HepG2 (cell line): ENCODE measurements at regions of chr2 and their contacts with region 1.

Region 1: GRCh38 chr2:223930103-223930976 is 14.8 kb downstream of the WDFY1 start:
- DNase-seq: peak; percentile 97
- ATAC-seq: peak; percentile 96
- H3K4me3 ChIP-seq: peak overlapping the region; percentile 53 to 68 (median 64)
- H3K27ac ChIP-seq: peak overlapping the region; percentile 90
- H3K4me1 ChIP-seq: peaks cover 63% of the 10 kb centered on the region
- H3K27me3 ChIP-seq: no peaks in the 10 kb centered on the region; a peak in 1 of 5 replicates
- CTCF ChIP-seq: 0 out of 2 replicates have a peak, but pooled peaks have one; percentile 16
- EP300 ChIP-seq: no peak; a peak in 1 of 4 replicates
- POLR2A ChIP-seq: peak; percentile 65 to 89; a peak in 3 of 4 replicates
- RAD21 ChIP-seq: no peak; the same call in none of the 2 replicates

Region 2: DNA sequence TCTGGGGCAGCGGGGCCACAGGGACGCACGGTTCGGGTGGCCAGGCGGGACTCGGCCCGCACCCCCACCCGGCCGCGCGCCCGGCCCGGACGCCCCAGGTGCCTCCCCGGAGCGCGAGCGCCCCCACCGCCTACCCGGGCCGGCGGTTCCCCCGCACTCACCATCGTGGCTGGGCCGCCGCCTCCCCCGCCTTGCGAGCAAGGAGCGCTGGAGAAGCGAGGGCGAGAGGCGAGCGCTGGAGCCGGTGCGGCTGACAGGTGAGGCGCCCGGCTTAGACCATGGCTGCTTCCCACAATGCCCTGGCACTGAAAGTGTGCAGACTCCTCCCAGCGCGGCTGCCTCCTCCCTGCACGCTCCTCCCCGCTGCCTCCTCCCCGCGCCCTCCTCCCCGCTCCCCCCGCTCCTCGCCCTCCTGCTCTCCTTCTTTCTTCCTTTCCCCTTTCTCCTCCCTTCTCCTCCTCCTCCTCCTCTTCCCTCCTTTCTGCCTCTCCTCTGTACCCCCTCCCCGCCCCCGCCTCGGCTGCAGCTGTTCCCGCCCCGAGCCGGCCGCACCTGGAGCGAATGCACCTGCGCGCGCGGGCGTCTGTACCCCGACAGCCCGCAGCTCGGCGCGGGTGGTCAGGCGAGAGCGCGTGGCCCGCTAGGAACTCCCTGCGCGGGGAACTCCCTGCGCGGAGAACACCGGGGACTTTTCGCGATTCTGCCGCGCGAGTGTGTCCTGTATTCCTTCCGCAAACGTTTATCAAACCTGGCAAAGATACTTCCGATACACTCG is 92.9 kb before region 1 on chr2 and contains the start of gene AP1S3:
- CTCF ChIA-PET with region 1: no interaction called
- POLR2A ChIA-PET with region 1: no interaction called
- in situ Hi-C with region 1: no loop called
- intact Hi-C with region 1: loop called (anchors 5 kb)
- DNase-seq: peak; percentile 69
- ATAC-seq: peak; percentile 94
- H3K4me3 ChIP-seq: peak within 1 kb of the TSS; percentile 78 to 89 (median 79)
- H3K27ac ChIP-seq: no peak within 1 kb of the TSS
- H3K4me1 ChIP-seq: peaks cover 29% of the 10 kb centered on the region
- H3K27me3 ChIP-seq: no peaks in the 10 kb centered on the region; a peak in 1 of 5 replicates
- CTCF ChIP-seq: peak; percentile 71
- EP300 ChIP-seq: no peak
- POLR2A ChIP-seq: peak; percentile 57 to 64; a peak in 3 of 4 replicates
- RAD21 ChIP-seq: peak; percentile 76
- total RNA-seq, gene AP1S3: 16.3 and 26.3 TPM in 2 replicates

Region 3: GRCh38 chr2:223860809-223861738 is 69.3 kb before region 1 on chr2:
- CTCF ChIA-PET with region 1: no interaction called
- POLR2A ChIA-PET with region 1: interaction called, 25 read pairs
- in situ Hi-C with region 1: no loop called
- intact Hi-C with region 1: loop called (anchors 1 kb)
- DNase-seq: peak; percentile 97
- ATAC-seq: peak; percentile 90
- H3K4me3 ChIP-seq: no peak overlapping the region; a peak in 1 of 6 replicates
- H3K27ac ChIP-seq: peak overlapping the region; percentile 59
- H3K4me1 ChIP-seq: peaks cover 29% of the 10 kb centered on the region
- H3K27me3 ChIP-seq: no peaks in the 10 kb centered on the region
- CTCF ChIP-seq: peak; percentile 63
- EP300 ChIP-seq: peak; percentile 62 to 89; a peak in 3 of 4 replicates
- POLR2A ChIP-seq: no peak
- RAD21 ChIP-seq: no peak

Region 4: DNA sequence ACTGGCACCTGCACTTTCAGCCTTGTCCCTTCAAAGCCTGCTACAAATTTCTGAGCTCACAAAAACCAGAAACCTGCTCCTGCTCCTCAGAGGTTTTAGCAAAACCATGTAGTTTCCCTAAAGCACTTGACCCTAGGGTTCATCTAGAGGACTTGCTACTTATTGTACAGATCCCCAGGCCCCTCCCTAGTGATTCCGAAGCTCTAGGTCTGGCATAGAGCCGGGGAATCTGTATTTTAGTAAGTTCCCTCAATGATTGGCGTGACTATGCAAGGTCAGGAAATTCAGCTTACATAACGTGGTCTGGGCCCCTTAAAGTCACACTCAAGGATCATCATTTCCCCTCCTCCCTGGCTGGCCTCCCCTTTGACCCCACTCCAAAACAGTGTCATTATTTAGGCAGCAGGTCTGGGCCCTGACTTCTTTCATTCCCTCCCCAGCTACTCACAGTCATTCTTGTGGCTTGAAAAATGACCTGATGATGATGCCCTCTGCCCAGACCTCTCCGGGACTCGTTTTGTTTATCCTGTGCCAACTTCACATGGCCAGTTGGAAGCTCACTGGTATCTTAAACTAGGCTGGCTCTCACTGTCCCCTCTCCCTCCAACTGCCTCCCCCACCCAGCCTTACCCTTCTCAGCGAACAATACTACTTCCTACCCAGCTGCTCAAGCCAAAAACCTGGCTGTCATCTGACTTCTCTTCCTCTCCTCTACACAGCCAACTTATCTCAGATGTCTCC is 21.2 kb before region 1 on chr2:
- CTCF ChIA-PET with region 1: no interaction called
- POLR2A ChIA-PET with region 1: interaction called, 82 read pairs
- in situ Hi-C with region 1: no loop called
- intact Hi-C with region 1: loop called (anchors 1 kb)
- DNase-seq: peak; percentile 50
- ATAC-seq: peak; percentile 4
- H3K4me3 ChIP-seq: peak overlapping the region in 2 of 3 experiments; percentile 10 to 32; a peak in 3 of 6 replicates
- H3K27ac ChIP-seq: peak overlapping the region; percentile 66
- H3K4me1 ChIP-seq: peaks cover 40% of the 10 kb centered on the region
- H3K27me3 ChIP-seq: no peaks in the 10 kb centered on the region
- CTCF ChIP-seq: no peak
- EP300 ChIP-seq: no peak; a peak in 1 of 4 replicates
- POLR2A ChIP-seq: no peak
- RAD21 ChIP-seq: no peak

Region 5: GRCh38 chr2:223957092-223957851 is 26.9 kb after region 1 on chr2 and contains the start of gene MRPL44:
- CTCF ChIA-PET with region 1: no interaction called
- POLR2A ChIA-PET with region 1: interaction called, 33 read pairs
- in situ Hi-C with region 1: no loop called
- intact Hi-C with region 1: loop called (anchors 2 kb)
- DNase-seq: peak; percentile 88
- ATAC-seq: peak; percentile 100
- H3K4me3 ChIP-seq: peak within 1 kb of the TSS; percentile 80 to 97 (median 86)
- H3K27ac ChIP-seq: peak within 1 kb of the TSS; percentile 76
- H3K4me1 ChIP-seq: peaks cover 58% of the 10 kb centered on the region
- H3K27me3 ChIP-seq: no peaks in the 10 kb centered on the region; a peak in 1 of 5 replicates
- CTCF ChIP-seq: peak; percentile 44
- EP300 ChIP-seq: peak; percentile 72 to 83; a peak in 3 of 4 replicates
- POLR2A ChIP-seq: peak; percentile 86 to 92
- RAD21 ChIP-seq: no peak; the same call in none of the 2 replicates
- total RNA-seq, gene MRPL44: 78.0 and 101 TPM in 2 replicates